ENCODE measurements at regions of chr20 and their contacts with region 1.

Region 1: DNA sequence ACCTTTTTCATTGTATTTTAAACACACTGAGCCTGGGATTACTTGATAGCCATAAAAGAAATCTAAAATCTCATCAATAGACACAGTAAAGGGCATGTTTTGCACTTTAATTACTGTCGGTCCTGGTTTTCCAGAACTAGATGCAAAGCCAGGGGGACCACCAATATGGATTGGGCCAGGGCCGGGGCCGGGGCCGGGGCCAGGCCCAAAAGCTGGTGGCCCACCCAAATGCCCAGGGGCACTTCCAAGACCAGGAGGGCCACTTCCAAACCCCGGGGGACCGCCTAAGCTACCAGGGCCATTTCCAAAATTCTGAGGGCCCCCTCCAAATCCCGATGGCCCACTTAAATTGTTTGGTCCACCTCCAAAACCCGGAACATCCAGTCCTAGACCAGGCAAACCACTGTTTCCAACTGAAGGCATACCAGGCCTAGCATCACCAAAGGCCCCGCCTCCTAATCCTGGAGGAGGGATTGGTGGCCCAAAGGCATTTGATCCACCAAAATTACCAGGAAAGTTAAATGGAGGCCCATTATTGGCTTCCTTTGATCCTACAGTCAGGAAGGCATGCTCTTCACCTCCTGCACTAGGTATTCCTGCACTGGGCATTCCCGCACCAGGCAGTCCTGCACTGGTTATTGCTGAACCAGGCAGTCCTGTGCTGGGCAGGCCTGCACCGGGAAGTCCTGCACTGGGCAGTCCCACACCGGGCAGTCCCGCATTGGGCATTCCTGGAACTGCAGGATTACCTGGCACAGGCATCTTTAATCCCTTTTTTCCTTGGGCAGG is 11.9 kb downstream of the CPNE1 start:
- DNase-seq: no peak
- ATAC-seq: no peak
- H3K4me3 ChIP-seq: no peak overlapping the region
- H3K27ac ChIP-seq: no peak overlapping the region
- H3K4me1 ChIP-seq: peaks cover 9% of the 10 kb centered on the region
- H3K27me3 ChIP-seq: no peaks in the 10 kb centered on the region
- CTCF ChIP-seq: no peak
- POLR2A ChIP-seq: no peak
- RAD21 ChIP-seq: no peak

Region 2: GRCh38 chr20:35638751-35639150 is 14.1 kb before region 1 on chr20:
- CTCF ChIA-PET with region 1: no interaction called
- POLR2A ChIA-PET with region 1: no interaction called
- dilution Hi-C with region 1: no loop called
- in situ Hi-C with region 1: no loop called
- intact Hi-C with region 1: loop called (anchors 1 kb)
- DNase-seq: no peak
- ATAC-seq: peak; percentile 24; the same call in 1 of the 2 replicates
- H3K4me3 ChIP-seq: no peak overlapping the region
- H3K27ac ChIP-seq: no peak overlapping the region
- H3K4me1 ChIP-seq: peaks cover 11% of the 10 kb centered on the region
- H3K27me3 ChIP-seq: no peaks in the 10 kb centered on the region
- CTCF ChIP-seq: no peak
- POLR2A ChIP-seq: no peak
- RAD21 ChIP-seq: no peak